OCI-LY7 (cell line): ENCODE measurements at regions of chr7 and their contacts with region 1.

Region 1: DNA sequence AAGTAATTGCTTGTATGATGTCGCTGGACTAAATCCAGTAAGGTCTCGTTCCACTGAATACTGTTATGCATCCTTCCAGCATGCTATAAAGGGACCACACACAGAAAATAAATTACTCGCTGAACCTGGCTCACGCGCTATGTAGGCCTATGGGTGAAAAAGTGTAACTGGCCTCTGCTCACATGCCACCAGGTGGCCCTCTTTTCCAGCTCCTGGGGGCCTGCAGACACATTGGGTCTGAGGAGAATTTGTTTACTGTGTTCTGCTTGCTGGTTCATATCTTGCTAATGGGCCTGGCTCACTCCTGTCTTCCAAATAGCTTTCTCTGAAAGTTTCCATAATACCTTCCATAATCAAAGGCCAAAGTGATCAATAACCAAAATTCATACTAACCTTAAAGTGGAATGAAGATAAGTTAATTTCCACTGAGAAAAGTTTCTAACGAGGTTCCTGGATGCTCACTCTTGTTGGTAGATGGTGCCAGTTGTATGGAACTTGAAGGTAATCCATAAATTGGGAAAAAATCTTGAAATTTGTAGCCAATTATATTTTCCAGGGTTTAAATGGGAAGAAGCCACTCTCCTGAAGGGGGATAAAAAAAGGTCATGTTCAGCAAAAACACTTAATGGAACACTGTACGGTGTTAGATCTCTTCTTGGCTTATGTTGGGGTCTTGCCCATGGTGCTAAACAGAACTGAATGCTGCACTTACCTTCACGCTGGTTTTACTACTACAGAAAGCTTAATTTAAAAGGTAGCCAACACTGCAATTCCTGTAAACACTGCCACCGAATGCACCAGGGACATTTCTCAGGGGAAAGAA is 27.0 kb upstream of the ZPBP start:
- DNase-seq: peak; percentile 80
- H3K4me3 ChIP-seq: no peak overlapping the region
- H3K27ac ChIP-seq: no peak overlapping the region
- H3K4me1 ChIP-seq: peaks cover 22% of the 10 kb centered on the region
- CTCF ChIP-seq: peak; percentile 97

Region 2: GRCh38 chr7:50142425-50143017 is 22.5 kb after region 1 on chr7:
- CTCF ChIA-PET with region 1: interaction called, 5 read pairs
- POLR2A ChIA-PET with region 1: interaction called, 8 read pairs
- intact Hi-C with region 1: loop called (anchors 2 kb)
- DNase-seq: peak; percentile 80
- H3K4me3 ChIP-seq: no peak overlapping the region
- H3K27ac ChIP-seq: peak overlapping the region; percentile 99
- H3K4me1 ChIP-seq: peaks cover 70% of the 10 kb centered on the region
- CTCF ChIP-seq: peak; percentile 96

Region 3: GRCh38 chr7:50369143-50370026 is 249.4 kb after region 1 on chr7:
- CTCF ChIA-PET with region 1: no interaction called
- POLR2A ChIA-PET with region 1: interaction called, 3 read pairs
- intact Hi-C with region 1: loop called (anchors 2 kb)
- DNase-seq: peak; percentile 83
- H3K4me3 ChIP-seq: no peak overlapping the region
- H3K27ac ChIP-seq: peak overlapping the region; percentile 30
- H3K4me1 ChIP-seq: peaks cover 17% of the 10 kb centered on the region
- CTCF ChIP-seq: peak; percentile 100

Region 4: GRCh38 chr7:50632561-50633413 is 512.8 kb after region 1 on chr7:
- CTCF ChIA-PET with region 1: no interaction called
- POLR2A ChIA-PET with region 1: interaction called, 3 read pairs
- intact Hi-C with region 1: loop called (anchors 5 kb)
- DNase-seq: peak; percentile 55
- H3K4me3 ChIP-seq: no peak overlapping the region
- H3K27ac ChIP-seq: no peak overlapping the region
- H3K4me1 ChIP-seq: no peaks in the 10 kb centered on the region
- CTCF ChIP-seq: peak; percentile 93